Gastrocnemius medialis (tissue), 4 donors: ENCODE measurements at regions of chr20 and their contacts with region 1.

Region 1: GRCh38 chr20:8131598-8132483 is at the start of gene PLCB1:
- DNase-seq: peak; percentile 70 to 73
- ATAC-seq: peak; percentile 84 to 88
- H3K4me3 ChIP-seq: peak within 1 kb of the TSS; percentile 66 to 86 (median 72)
- H3K27ac ChIP-seq: peak within 1 kb of the TSS; percentile 68 to 85 (median 73)
- H3K4me1 ChIP-seq: peaks cover 18% of the 10 kb centered on the region in 2 donors
- H3K27me3 ChIP-seq: no peaks in the 10 kb centered on the region
- CTCF ChIP-seq: peak; percentile 80 to 97 (median 88)
- POLR2A ChIP-seq: no peak
- total RNA-seq, gene PLCB1: 4.1 to 10.0 (median 7.6) TPM

Region 2: GRCh38 chr20:8043687-8044282 is 88.1 kb before region 1 on chr20:
- in situ Hi-C with region 1: no loop called
- intact Hi-C with region 1: loop called (anchors 2 kb)
- DNase-seq: no peak
- ATAC-seq: peak; percentile 80
- H3K4me3 ChIP-seq: no peak overlapping the region
- H3K27ac ChIP-seq: no peak overlapping the region
- H3K4me1 ChIP-seq: no peaks in the 10 kb centered on the region
- H3K27me3 ChIP-seq: no peaks in the 10 kb centered on the region
- CTCF ChIP-seq: peak; percentile 41 to 76 (median 65)
- POLR2A ChIP-seq: no peak

Region 3: GRCh38 chr20:8244637-8245036 is 112.8 kb after region 1 on chr20:
- in situ Hi-C with region 1: no loop called
- intact Hi-C with region 1: loop called (anchors 10 kb)
- DNase-seq: peak; percentile 25 to 41
- ATAC-seq: peak in 1 of 2 donors; percentile 74
- H3K4me3 ChIP-seq: no peak overlapping the region
- H3K27ac ChIP-seq: peak overlapping the region; percentile 63 to 70 (median 64)
- H3K4me1 ChIP-seq: peaks cover 44 to 45% of the 10 kb centered on the region in 2 donors
- H3K27me3 ChIP-seq: no peaks in the 10 kb centered on the region
- CTCF ChIP-seq: no peak
- POLR2A ChIP-seq: no peak

Region 4: DNA sequence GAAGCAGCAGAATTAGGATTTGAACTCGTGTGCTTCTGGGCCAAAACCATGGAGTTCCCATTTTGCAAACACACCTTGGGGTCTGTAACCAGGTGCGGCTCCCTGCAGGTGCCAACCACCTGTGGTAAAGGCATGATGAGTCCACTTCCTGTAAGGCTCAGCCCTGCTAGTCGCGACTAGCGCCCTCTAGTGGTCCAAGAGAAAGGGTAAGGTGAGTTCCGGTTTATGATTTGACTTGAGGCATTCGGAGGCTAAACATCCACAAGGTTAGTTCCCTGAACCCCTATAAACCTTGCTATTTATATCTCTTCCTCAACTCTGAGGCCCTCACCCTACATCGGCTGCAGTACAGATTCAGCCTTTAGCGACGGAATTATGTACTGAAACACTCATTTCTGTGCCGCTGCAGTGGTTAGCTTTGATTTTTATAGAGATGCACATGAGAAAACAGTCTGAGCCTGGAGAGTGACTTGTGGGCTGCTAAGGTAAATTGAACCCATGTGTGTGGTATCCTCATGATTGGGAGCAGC is 173.7 kb after region 1 on chr20:
- in situ Hi-C with region 1: loop called in 1 of 4 experiments (anchors 5 kb)
- intact Hi-C with region 1: loop called (anchors 2 kb)
- DNase-seq: peak; percentile 10 to 37
- ATAC-seq: peak in 1 of 2 donors; percentile 53
- H3K4me3 ChIP-seq: no peak overlapping the region
- H3K27ac ChIP-seq: no peak overlapping the region
- H3K4me1 ChIP-seq: peaks cover 28 to 30% of the 10 kb centered on the region in 2 donors
- H3K27me3 ChIP-seq: no peaks in the 10 kb centered on the region
- CTCF ChIP-seq: peak; percentile 17 to 67 (median 51)
- POLR2A ChIP-seq: no peak

Region 5: DNA sequence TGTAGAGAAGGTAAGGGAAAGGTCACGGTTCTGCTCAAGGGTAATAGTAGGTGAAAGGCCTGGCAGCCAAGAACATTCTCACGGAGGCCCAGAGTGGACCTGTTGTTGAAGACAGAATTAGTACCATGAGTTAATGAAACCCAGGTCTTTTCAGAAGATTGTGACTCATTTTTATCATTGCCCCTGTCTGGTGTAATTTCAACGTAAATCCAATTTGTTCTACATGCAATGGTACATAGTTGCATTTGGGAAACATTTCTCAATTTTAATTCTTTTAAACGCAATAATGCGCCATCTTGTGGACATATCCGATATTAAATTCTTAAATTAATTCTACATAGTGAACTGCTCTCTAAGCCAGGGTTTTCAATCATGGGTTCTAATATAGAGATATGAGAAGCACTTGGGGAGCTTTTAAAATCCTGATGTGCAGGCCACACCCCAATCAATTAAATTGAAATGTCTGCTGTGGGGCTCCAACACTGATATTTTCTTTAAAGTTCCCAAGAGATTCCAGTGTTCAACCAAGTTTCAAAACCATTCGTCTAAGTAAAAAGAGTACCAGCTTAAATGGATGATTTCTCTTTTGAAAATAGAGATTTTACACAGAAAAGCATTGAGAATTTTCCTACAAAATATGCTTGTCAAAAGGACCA is 257.7 kb after region 1 on chr20:
- in situ Hi-C with region 1: loop called (anchors 5 to 10 kb)
- intact Hi-C with region 1: loop called (anchors 1 kb)
- DNase-seq: no peak
- ATAC-seq: peak in 1 of 2 donors; percentile 65
- H3K4me3 ChIP-seq: peak overlapping the region in 3 of 4 donors; percentile 6 to 27 (median 22)
- H3K27ac ChIP-seq: no peak overlapping the region
- H3K4me1 ChIP-seq: peaks cover 0 to 28% of the 10 kb centered on the region in 2 donors
- H3K27me3 ChIP-seq: no peaks in the 10 kb centered on the region
- CTCF ChIP-seq: peak; percentile 46 to 68 (median 59)
- POLR2A ChIP-seq: no peak